ENCODE measurements at regions of chr4 and their contacts with region 1.

Region 1: GRCh38 chr4:113547487-113548042 is 214.0 kb downstream of the CAMK2D start:
- DNase-seq: peak; percentile 92 to 95
- ATAC-seq: peak; percentile 91

Region 2: GRCh38 chr4:113761620-113762185 is 214.1 kb after region 1 on chr4 and contains the start of gene CAMK2D:
- intact Hi-C with region 1: loop called in 1 of 2 experiments (anchors 5 kb)
- DNase-seq: peak; percentile 89 to 95
- ATAC-seq: peak; percentile 76
- total RNA-seq, gene CAMK2D: 86.6 to 87.3 TPM